ENCODE measurements at regions of chr2 and their contacts with region 1.

Region 1: GRCh38 chr2:186349508-186349907 is 136.6 kb upstream of the ZC3H15 start:
- DNase-seq: peak; percentile 12
- H3K4me3 Mint-ChIP-seq: no peak overlapping the region
- H3K27ac Mint-ChIP-seq: peak overlapping the region; percentile 73
- H3K4me1 Mint-ChIP-seq: peaks cover 7% of the 10 kb centered on the region
- H3K27me3 Mint-ChIP-seq: no peaks in the 10 kb centered on the region
- CTCF ChIP-seq: no peak

Region 2: DNA sequence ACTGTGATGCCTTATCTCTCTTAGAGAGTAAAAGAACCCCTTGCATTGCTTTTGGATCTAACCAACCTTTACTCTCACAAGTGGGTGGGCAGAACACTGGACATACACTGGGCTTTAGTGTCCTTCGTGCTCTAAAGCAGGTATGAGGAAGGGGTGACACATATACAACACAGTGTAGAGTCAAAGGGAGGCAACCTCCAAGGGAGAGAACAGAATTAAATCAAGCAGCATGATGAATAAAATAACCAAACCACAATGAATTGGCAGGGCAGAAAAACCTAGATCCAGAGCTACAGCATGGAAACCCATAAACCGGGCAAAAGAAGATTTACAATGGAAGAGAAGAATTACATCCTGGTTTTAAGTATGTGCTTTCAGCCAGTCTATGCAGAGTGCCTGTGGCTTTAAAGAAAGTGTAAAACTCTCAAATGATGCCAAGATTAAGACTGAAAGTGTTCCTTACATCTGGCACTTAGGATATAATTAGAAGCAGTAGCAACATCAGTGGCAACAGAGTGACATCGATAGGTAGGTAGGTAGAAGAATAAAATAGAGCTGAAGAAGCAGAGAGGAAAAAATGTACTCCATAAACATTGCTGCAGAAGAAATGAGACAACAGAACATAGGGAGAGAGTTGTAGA is 55.1 kb before region 1 on chr2:
- CTCF ChIA-PET with region 1: no interaction called
- intact Hi-C with region 1: no loop called
- DNase-seq: no peak
- H3K4me3 Mint-ChIP-seq: no peak overlapping the region
- H3K27ac Mint-ChIP-seq: no peak overlapping the region
- H3K4me1 Mint-ChIP-seq: no peaks in the 10 kb centered on the region
- H3K27me3 Mint-ChIP-seq: no peaks in the 10 kb centered on the region
- CTCF ChIP-seq: no peak

Region 3: GRCh38 chr2:186445506-186445905 is 96.0 kb after region 1 on chr2:
- CTCF ChIA-PET with region 1: no interaction called
- intact Hi-C with region 1: loop called (anchors 5 kb)
- DNase-seq: no peak
- H3K4me3 Mint-ChIP-seq: no peak overlapping the region
- H3K27ac Mint-ChIP-seq: no peak overlapping the region
- H3K4me1 Mint-ChIP-seq: peaks cover 21% of the 10 kb centered on the region
- H3K27me3 Mint-ChIP-seq: no peaks in the 10 kb centered on the region
- CTCF ChIP-seq: no peak

Region 4: DNA sequence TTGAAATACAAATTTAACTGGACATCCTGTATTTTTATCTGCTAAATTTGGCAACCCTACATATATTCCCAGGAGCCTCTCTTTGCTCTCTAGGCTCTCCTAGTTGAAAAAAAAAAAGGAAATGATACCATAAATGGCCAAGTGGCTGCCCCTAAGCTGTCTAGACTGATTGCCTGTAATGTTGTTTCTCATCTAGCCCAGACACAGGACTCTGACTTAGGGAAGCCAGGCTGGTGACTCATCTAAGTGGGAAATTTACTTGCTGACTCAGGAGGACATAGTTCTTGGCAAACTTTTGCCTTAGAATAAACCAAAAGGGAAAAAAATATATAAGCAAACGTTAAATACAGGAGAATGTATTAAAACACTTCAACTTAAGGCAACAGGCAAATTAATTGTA is 225.8 kb after region 1 on chr2:
- CTCF ChIA-PET with region 1: no interaction called
- intact Hi-C with region 1: no loop called
- DNase-seq: peak; percentile 67
- H3K4me3 Mint-ChIP-seq: no peak overlapping the region
- H3K27ac Mint-ChIP-seq: peak overlapping the region; percentile 67
- H3K4me1 Mint-ChIP-seq: peaks cover 32% of the 10 kb centered on the region
- H3K27me3 Mint-ChIP-seq: no peaks in the 10 kb centered on the region
- CTCF ChIP-seq: no peak

Measured in Calu3 (cell line).